ENCODE measurements at regions of chr5 and their contacts with region 1.

Region 1: DNA sequence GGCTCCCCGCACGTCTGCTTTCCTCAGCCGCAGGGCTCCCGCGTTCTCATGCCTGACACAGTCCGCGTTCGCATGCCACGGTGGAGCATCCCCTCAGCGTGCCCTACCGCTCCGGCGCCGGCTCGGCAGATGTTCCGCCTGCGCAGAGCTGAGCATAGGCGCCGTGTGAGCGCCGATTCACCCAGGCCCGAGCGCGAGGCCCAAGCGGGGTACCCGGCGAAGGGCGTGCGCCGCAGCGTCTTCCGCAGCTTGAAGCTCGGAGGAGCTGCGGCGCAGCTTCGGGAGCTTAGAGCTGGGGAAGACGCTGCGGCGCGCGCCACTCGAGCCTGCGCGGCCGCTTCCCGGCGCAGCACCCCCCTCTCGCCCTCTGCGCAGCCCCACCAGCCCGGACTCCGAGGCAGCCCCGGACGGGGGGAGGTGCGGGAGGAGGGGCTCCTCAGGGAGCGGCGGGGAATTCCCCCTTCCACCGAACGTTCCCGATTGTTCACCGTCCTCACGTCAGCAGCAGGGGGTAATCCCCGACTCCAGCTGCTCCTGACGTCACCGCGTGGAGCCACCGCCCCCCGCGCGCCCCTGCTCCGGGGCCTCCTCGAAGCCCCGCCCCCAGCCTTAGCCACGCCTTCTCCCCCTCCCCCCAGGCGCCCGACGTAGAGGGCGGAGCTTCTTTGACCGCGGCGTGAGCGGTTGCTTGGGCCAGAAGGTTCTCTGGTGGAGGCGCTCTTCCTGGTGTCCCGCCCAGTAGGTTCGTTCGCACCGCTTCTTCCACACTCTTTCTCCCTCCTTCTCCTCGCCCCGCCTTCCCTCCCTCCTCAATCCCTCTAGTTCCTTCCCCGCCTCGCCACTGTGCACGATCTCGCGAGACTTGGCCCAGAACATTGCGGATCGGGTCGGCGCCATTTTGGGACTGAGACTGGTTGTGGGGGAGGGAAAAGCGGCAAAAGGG is at the start of gene GPBP1:
- DNase-seq: peak; percentile 98
- ATAC-seq: peak; percentile 79
- H3K4me3 Mint-ChIP-seq: peak within 1 kb of the TSS; percentile 88
- H3K27ac Mint-ChIP-seq: peak within 1 kb of the TSS; percentile 95
- H3K4me1 Mint-ChIP-seq: peaks cover 12% of the 10 kb centered on the region
- H3K27me3 Mint-ChIP-seq: no peaks in the 10 kb centered on the region
- CTCF ChIP-seq: no peak
- total RNA-seq, gene GPBP1: 87.9 to 88.5 TPM

Region 2: DNA sequence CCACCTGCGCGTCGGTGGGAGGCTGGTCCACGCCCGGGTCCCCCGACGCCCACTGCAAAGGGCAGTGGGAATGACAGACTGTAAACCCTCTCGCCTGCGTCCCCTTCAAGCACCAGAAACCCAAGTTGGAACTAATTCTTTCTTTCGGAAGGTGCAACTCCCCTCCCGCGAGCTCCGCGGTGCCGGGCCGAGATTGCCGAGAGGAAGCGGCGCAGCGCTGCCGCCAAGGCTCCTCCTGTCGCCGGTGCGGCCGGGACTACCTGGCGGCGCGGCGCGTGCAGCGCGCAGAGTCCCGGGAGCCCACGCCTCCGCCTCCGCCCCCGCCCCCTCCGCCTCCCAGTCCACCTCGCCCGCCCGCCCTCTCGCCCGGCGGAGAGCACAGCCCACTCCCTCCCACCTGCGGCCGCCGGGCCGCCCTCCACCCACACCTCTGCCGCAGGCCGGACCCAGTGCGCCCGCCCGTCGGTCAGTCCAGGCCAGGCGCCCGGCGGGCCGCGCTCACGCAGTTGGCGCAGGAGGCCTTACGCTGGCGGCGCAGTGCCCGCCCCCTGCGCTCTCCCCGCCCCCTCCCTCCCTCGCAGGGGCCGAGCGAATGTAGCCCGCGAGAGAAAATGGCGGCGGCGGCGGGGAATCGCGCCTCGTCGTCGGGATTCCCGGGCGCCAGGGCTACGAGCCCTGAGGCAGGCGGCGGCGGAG is 358.3 kb before region 1 on chr5 and contains the start of gene MAP3K1:
- CTCF ChIA-PET with region 1: no interaction called
- POLR2A ChIA-PET with region 1: no interaction called
- intact Hi-C with region 1: loop called (anchors 5 kb)
- DNase-seq: peak; percentile 73
- ATAC-seq: peak; percentile 72
- H3K4me3 Mint-ChIP-seq: peak within 1 kb of the TSS; percentile 87
- H3K27ac Mint-ChIP-seq: peak within 1 kb of the TSS; percentile 92
- H3K4me1 Mint-ChIP-seq: peaks cover 39% of the 10 kb centered on the region
- H3K27me3 Mint-ChIP-seq: peaks cover 5% of the 10 kb centered on the region
- CTCF ChIP-seq: no peak
- total RNA-seq, gene MAP3K1: 16.9 to 17.0 TPM

Region 3: GRCh38 chr5:57094753-57095683 is 78.4 kb before region 1 on chr5:
- CTCF ChIA-PET with region 1: no interaction called
- POLR2A ChIA-PET with region 1: no interaction called
- intact Hi-C with region 1: no loop called
- DNase-seq: peak; percentile 10
- ATAC-seq: no peak
- H3K4me3 Mint-ChIP-seq: no peak overlapping the region
- H3K27ac Mint-ChIP-seq: no peak overlapping the region
- H3K4me1 Mint-ChIP-seq: no peaks in the 10 kb centered on the region
- H3K27me3 Mint-ChIP-seq: no peaks in the 10 kb centered on the region
- CTCF ChIP-seq: no peak

Region 4: DNA sequence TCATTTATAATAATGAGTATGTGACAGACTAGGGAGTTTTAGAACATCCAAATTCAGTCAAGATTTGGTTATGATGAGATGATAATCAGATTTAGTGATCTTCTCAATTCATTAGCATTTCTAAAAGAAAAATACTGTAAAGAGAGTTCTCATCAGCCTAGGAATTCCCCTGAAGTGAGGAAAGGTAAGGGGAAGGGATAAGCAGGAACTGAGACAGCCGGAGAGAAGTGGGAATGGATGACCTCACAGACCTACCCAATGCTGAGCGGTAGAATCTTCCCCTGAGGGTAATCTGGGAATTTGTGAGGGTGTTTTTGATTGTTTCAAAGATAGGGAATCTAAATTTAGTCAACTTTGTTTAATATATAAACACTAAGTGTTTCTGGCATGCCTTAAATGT is 16.3 kb before region 1 on chr5:
- CTCF ChIA-PET with region 1: no interaction called
- POLR2A ChIA-PET with region 1: no interaction called
- intact Hi-C with region 1: no loop called
- DNase-seq: no peak
- ATAC-seq: no peak
- H3K4me3 Mint-ChIP-seq: no peak overlapping the region
- H3K27ac Mint-ChIP-seq: no peak overlapping the region
- H3K4me1 Mint-ChIP-seq: no peaks in the 10 kb centered on the region
- H3K27me3 Mint-ChIP-seq: no peaks in the 10 kb centered on the region
- CTCF ChIP-seq: no peak

Region 5: GRCh38 chr5:57191986-57192385 is 18.5 kb after region 1 on chr5:
- CTCF ChIA-PET with region 1: interaction called, 4 read pairs
- POLR2A ChIA-PET with region 1: interaction called, 17 read pairs
- intact Hi-C with region 1: no loop called
- DNase-seq: no peak
- ATAC-seq: no peak
- H3K4me3 Mint-ChIP-seq: no peak overlapping the region
- H3K27ac Mint-ChIP-seq: no peak overlapping the region
- H3K4me1 Mint-ChIP-seq: peaks cover 77% of the 10 kb centered on the region
- H3K27me3 Mint-ChIP-seq: no peaks in the 10 kb centered on the region
- CTCF ChIP-seq: no peak

Region 6: GRCh38 chr5:57221049-57221568 is 47.7 kb after region 1 on chr5:
- CTCF ChIA-PET with region 1: interaction called, 6 read pairs
- POLR2A ChIA-PET with region 1: interaction called, 4 read pairs
- intact Hi-C with region 1: loop called (anchors 2 kb)
- DNase-seq: no peak
- ATAC-seq: peak; percentile 79
- H3K4me3 Mint-ChIP-seq: no peak overlapping the region
- H3K27ac Mint-ChIP-seq: peak overlapping the region; percentile 67
- H3K4me1 Mint-ChIP-seq: peaks cover 49% of the 10 kb centered on the region
- H3K27me3 Mint-ChIP-seq: no peaks in the 10 kb centered on the region
- CTCF ChIP-seq: peak; percentile 96

Measured in activated CD8-positive, alpha-beta T cell treated with anti-CD3 and anti-CD28 coated beads for 36 hours (primary cell).